H1 (cell line): ENCODE measurements at regions of chr9 and their contacts with region 1.

Region 1: GRCh38 chr9:3809724-3810123 is 283.9 kb upstream of the RFX3 start:
- DNase-seq: no peak
- H3K4me3 ChIP-seq: no peak overlapping the region
- H3K27ac ChIP-seq: no peak overlapping the region
- H3K4me1 ChIP-seq: no peaks in the 10 kb centered on the region
- H3K27me3 ChIP-seq: no peaks in the 10 kb centered on the region
- CTCF ChIP-seq: no peak
- EP300 ChIP-seq: no peak
- POLR2A ChIP-seq: no peak
- RAD21 ChIP-seq: no peak

Region 2: GRCh38 chr9:3608011-3608410 is 201.7 kb before region 1 on chr9:
- CTCF ChIA-PET with region 1: no interaction called
- POLR2A ChIA-PET with region 1: no interaction called
- DNase-seq: no peak
- H3K4me3 ChIP-seq: no peak overlapping the region
- H3K27ac ChIP-seq: no peak overlapping the region
- H3K4me1 ChIP-seq: no peaks in the 10 kb centered on the region
- H3K27me3 ChIP-seq: no peaks in the 10 kb centered on the region
- CTCF ChIP-seq: no peak
- EP300 ChIP-seq: no peak
- POLR2A ChIP-seq: no peak
- RAD21 ChIP-seq: no peak

Region 3: DNA sequence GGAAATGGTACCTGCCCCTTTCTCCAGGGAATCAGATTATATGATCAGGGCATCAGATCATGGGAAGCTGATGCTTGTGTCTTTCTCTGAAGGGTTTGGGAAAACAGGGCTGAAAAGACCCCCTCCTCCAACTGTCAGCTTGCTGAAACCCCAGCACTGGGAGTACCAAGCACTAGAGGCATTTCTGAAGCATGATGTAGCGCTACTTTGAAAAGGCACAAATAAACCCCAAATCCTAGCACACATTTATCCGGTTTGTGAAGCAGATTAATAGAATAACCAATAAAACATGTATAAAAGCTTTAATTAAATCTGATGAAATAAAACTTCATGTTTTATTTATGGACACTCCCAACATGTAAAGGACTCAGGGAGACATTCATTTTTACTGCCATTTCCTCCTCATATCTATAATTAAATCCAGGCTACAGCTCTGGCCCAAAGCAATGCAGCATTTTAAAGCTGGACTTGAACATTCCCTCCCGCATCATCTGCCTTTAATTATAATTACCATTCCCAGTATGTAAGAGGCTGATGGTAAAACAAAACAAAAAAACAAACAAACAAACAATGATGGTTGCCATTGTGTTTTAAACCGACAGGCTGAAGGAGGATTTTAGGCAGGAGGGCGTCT is 14.2 kb after region 1 on chr9:
- CTCF ChIA-PET with region 1: interaction called, 11 read pairs
- POLR2A ChIA-PET with region 1: interaction called, 4 read pairs
- DNase-seq: no peak
- H3K4me3 ChIP-seq: no peak overlapping the region
- H3K27ac ChIP-seq: no peak overlapping the region
- H3K4me1 ChIP-seq: peaks cover 0 to 9% (median 2%) of the 10 kb centered on the region in 4 experiments; a peak in 3 of 7 replicates
- H3K27me3 ChIP-seq: no peaks in the 10 kb centered on the region
- CTCF ChIP-seq: no peak
- EP300 ChIP-seq: no peak
- POLR2A ChIP-seq: no peak
- RAD21 ChIP-seq: no peak

Region 4: GRCh38 chr9:3929345-3930047 is 119.8 kb after region 1 on chr9:
- CTCF ChIA-PET with region 1: no interaction called
- POLR2A ChIA-PET with region 1: no interaction called
- DNase-seq: no peak
- H3K4me3 ChIP-seq: no peak overlapping the region
- H3K27ac ChIP-seq: no peak overlapping the region
- H3K4me1 ChIP-seq: peaks cover 0 to 3% (median 0%) of the 10 kb centered on the region in 4 experiments; a peak in 1 of 7 replicates
- H3K27me3 ChIP-seq: no peaks in the 10 kb centered on the region
- CTCF ChIP-seq: no peak
- EP300 ChIP-seq: no peak
- POLR2A ChIP-seq: no peak
- RAD21 ChIP-seq: no peak